ENCODE measurements at regions of chr12 and their contacts with region 1.

Region 1: GRCh38 chr12:56688129-56688845 is at the start of gene PTGES3:
- DNase-seq: peak; percentile 94 to 99 (median 97)
- ATAC-seq: peak; percentile 69
- H3K4me3 ChIP-seq: peak within 1 kb of the TSS; percentile 75 to 99
- H3K4me3 Mint-ChIP-seq: peak within 1 kb of the TSS; percentile 98
- H3K27ac ChIP-seq: peak within 1 kb of the TSS; percentile 97 to 98
- H3K27ac Mint-ChIP-seq: peak within 1 kb of the TSS; percentile 99
- H3K4me1 ChIP-seq: peaks cover 35% of the 10 kb centered on the region
- H3K4me1 Mint-ChIP-seq: peaks cover 34% of the 10 kb centered on the region
- H3K27me3 ChIP-seq: no peaks in the 10 kb centered on the region
- H3K27me3 Mint-ChIP-seq: no peaks in the 10 kb centered on the region
- CTCF ChIP-seq: no peak
- total RNA-seq, gene PTGES3: 148 to 154 TPM

Region 2: GRCh38 chr12:56104109-56104814 is 584.0 kb before region 1 on chr12 and contains the start of gene PA2G4:
- CTCF ChIA-PET with region 1: no interaction called
- POLR2A ChIA-PET with region 1: interaction called, 5 read pairs
- intact Hi-C with region 1: loop called in 1 of 2 experiments (anchors 5 kb)
- DNase-seq: peak; percentile 91 to 99 (median 96)
- ATAC-seq: peak; percentile 88
- H3K4me3 ChIP-seq: peak within 1 kb of the TSS; percentile 90
- H3K4me3 Mint-ChIP-seq: peak within 1 kb of the TSS; percentile 99
- H3K27ac ChIP-seq: peak within 1 kb of the TSS; percentile 53 to 70
- H3K27ac Mint-ChIP-seq: peak within 1 kb of the TSS; percentile 98
- H3K4me1 ChIP-seq: peaks cover 37% of the 10 kb centered on the region
- H3K4me1 Mint-ChIP-seq: peaks cover 66% of the 10 kb centered on the region
- H3K27me3 ChIP-seq: no peaks in the 10 kb centered on the region
- H3K27me3 Mint-ChIP-seq: no peaks in the 10 kb centered on the region
- CTCF ChIP-seq: no peak
- total RNA-seq, gene PA2G4: 61.6 to 62.4 TPM

Region 3: GRCh38 chr12:56333679-56334489 is 354.4 kb before region 1 on chr12 and contains the start of gene PAN2:
- CTCF ChIA-PET with region 1: no interaction called
- POLR2A ChIA-PET with region 1: no interaction called
- intact Hi-C with region 1: loop called in 1 of 2 experiments (anchors 10 kb)
- DNase-seq: peak; percentile 87 to 98 (median 93)
- ATAC-seq: peak; percentile 80
- H3K4me3 ChIP-seq: peak within 1 kb of the TSS; percentile 47 to 85
- H3K4me3 Mint-ChIP-seq: peak within 1 kb of the TSS; percentile 96
- H3K27ac ChIP-seq: peak within 1 kb of the TSS; percentile 97 to 100
- H3K27ac Mint-ChIP-seq: peak within 1 kb of the TSS; percentile 100
- H3K4me1 ChIP-seq: peaks cover 27% of the 10 kb centered on the region
- H3K4me1 Mint-ChIP-seq: peaks cover 53% of the 10 kb centered on the region
- H3K27me3 ChIP-seq: no peaks in the 10 kb centered on the region
- H3K27me3 Mint-ChIP-seq: no peaks in the 10 kb centered on the region
- CTCF ChIP-seq: peak; percentile 64
- total RNA-seq, gene PAN2: 111 to 113 TPM

Region 4: GRCh38 chr12:56636675-56637540 is 51.4 kb before region 1 on chr12:
- CTCF ChIA-PET with region 1: interaction called, 12 read pairs
- POLR2A ChIA-PET with region 1: interaction called, 36 read pairs
- intact Hi-C with region 1: loop called (anchors 1 to 2 kb)
- DNase-seq: peak; percentile 91 to 99 (median 97)
- ATAC-seq: peak; percentile 71
- H3K4me3 ChIP-seq: peak overlapping the region; percentile 58 to 79
- H3K4me3 Mint-ChIP-seq: peak overlapping the region; percentile 98
- H3K27ac ChIP-seq: peak overlapping the region; percentile 79 to 87
- H3K27ac Mint-ChIP-seq: peak overlapping the region; percentile 97
- H3K4me1 ChIP-seq: peaks cover 45% of the 10 kb centered on the region
- H3K4me1 Mint-ChIP-seq: peaks cover 57% of the 10 kb centered on the region
- H3K27me3 ChIP-seq: no peaks in the 10 kb centered on the region
- H3K27me3 Mint-ChIP-seq: no peaks in the 10 kb centered on the region
- CTCF ChIP-seq: peak; percentile 71

Region 5: DNA sequence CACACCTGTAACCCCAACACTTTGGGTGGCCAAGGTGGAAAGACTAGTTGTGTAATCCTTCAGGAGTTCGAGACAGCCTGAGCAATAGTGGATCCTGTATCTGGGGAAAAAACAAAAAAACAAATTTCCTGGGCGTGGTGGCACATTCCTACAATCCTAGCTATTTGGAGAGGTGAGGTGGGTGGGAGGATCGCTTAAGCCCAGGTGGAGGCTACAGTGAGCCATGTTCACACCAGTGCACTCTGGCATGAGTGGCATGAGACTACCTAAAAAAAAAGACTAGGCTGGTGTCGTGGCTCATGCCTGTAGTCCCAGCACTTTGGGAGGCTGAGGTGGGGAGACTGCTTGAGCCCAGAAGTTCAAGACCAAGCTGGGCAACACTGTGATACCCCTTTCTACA is 17.5 kb before region 1 on chr12:
- CTCF ChIA-PET with region 1: interaction called, 3 read pairs
- POLR2A ChIA-PET with region 1: interaction called, 39 read pairs
- intact Hi-C with region 1: no loop called
- DNase-seq: no peak
- ATAC-seq: no peak
- H3K4me3 ChIP-seq: no peak overlapping the region
- H3K4me3 Mint-ChIP-seq: no peak overlapping the region
- H3K27ac ChIP-seq: no peak overlapping the region
- H3K27ac Mint-ChIP-seq: peak overlapping the region; percentile 57
- H3K4me1 ChIP-seq: peaks cover 10% of the 10 kb centered on the region
- H3K4me1 Mint-ChIP-seq: peaks cover 43% of the 10 kb centered on the region
- H3K27me3 ChIP-seq: no peaks in the 10 kb centered on the region
- H3K27me3 Mint-ChIP-seq: no peaks in the 10 kb centered on the region
- CTCF ChIP-seq: no peak

Region 6: GRCh38 chr12:56724972-56725722 is 36.9 kb after region 1 on chr12 and contains the start of gene NACA:
- CTCF ChIA-PET with region 1: interaction called, 7 read pairs
- POLR2A ChIA-PET with region 1: interaction called, 45 read pairs
- intact Hi-C with region 1: loop called (anchors 1 kb)
- DNase-seq: peak; percentile 94 to 99 (median 97)
- ATAC-seq: peak; percentile 95
- H3K4me3 ChIP-seq: peak within 1 kb of the TSS; percentile 70 to 88
- H3K4me3 Mint-ChIP-seq: peak within 1 kb of the TSS; percentile 99
- H3K27ac ChIP-seq: peak within 1 kb of the TSS; percentile 75 to 80
- H3K27ac Mint-ChIP-seq: peak within 1 kb of the TSS; percentile 96
- H3K4me1 ChIP-seq: peaks cover 45% of the 10 kb centered on the region
- H3K4me1 Mint-ChIP-seq: peaks cover 52% of the 10 kb centered on the region
- H3K27me3 ChIP-seq: no peaks in the 10 kb centered on the region
- H3K27me3 Mint-ChIP-seq: no peaks in the 10 kb centered on the region
- CTCF ChIP-seq: no peak
- total RNA-seq, gene NACA: 1,373 to 1,407 TPM

Region 7: GRCh38 chr12:57088459-57089248 is 400.4 kb after region 1 on chr12 and contains the start of gene NAB2:
- CTCF ChIA-PET with region 1: no interaction called
- POLR2A ChIA-PET with region 1: no interaction called
- intact Hi-C with region 1: loop called in 1 of 2 experiments (anchors 1 kb)
- DNase-seq: peak; percentile 87 to 97 (median 95)
- ATAC-seq: peak; percentile 60
- H3K4me3 ChIP-seq: peak within 1 kb of the TSS; percentile 87 to 95
- H3K4me3 Mint-ChIP-seq: peak within 1 kb of the TSS; percentile 92
- H3K27ac ChIP-seq: peak within 1 kb of the TSS; percentile 97 to 100
- H3K27ac Mint-ChIP-seq: peak within 1 kb of the TSS; percentile 95
- H3K4me1 ChIP-seq: peaks cover 47% of the 10 kb centered on the region
- H3K4me1 Mint-ChIP-seq: peaks cover 64% of the 10 kb centered on the region
- H3K27me3 ChIP-seq: no peaks in the 10 kb centered on the region
- H3K27me3 Mint-ChIP-seq: no peaks in the 10 kb centered on the region
- CTCF ChIP-seq: no peak
- total RNA-seq, gene NAB2: 5.9 to 6.7 TPM